ENCODE measurements at regions of chr11 and their contacts with region 1.

Region 1: GRCh38 chr11:100687630-100688395 is 725 bp downstream of the ARHGAP42 start:
- DNase-seq: peak; percentile 79
- H3K4me3 ChIP-seq: peak overlapping the region; percentile 50 to 78 (median 63)
- H3K27ac ChIP-seq: peak overlapping the region; percentile 67
- H3K4me1 ChIP-seq: peaks cover 36% of the 10 kb centered on the region
- H3K27me3 ChIP-seq: no peaks in the 10 kb centered on the region
- CTCF ChIP-seq: peak; percentile 68 to 69

Region 2: DNA sequence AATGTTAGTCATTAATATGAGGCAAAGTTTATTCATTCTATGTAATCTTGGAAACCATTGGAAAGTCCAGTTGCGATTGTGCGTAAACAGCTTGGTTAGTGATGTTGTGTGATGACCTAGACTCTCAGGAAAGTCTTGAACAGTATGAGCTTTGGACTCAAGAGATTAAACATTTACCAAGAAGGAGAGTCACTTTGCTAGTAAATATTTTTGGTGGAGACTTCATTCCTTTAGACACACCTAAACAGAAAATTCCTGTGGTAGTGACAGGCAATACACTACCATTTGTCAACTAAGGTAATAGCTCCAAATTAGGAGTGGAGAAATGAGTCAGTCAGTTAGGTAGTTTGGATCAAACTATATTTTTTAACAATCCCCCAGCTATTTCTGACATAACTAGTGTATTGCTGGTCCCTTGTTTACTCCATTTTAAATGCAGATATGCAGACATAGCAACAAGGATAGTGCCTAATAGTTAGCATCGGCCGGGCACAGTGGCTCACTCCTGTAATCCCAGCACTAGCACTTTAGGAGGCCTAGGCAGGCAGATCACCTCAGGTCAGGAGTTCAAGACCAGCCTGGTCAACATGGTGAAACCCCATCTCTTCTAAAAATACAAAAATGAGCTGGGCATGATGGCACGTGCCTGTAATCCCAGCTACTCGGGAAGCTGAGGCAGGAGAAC is 88.5 kb after region 1 on chr11:
- CTCF ChIA-PET with region 1: no interaction called
- dilution Hi-C with region 1: no loop called
- in situ Hi-C with region 1: no loop called
- intact Hi-C with region 1: loop called (anchors 1 kb)
- DNase-seq: peak; percentile 90
- H3K4me3 ChIP-seq: no peak overlapping the region
- H3K27ac ChIP-seq: peak overlapping the region; percentile 87
- H3K4me1 ChIP-seq: peaks cover 26% of the 10 kb centered on the region
- H3K27me3 ChIP-seq: no peaks in the 10 kb centered on the region
- CTCF ChIP-seq: no peak

Region 3: DNA sequence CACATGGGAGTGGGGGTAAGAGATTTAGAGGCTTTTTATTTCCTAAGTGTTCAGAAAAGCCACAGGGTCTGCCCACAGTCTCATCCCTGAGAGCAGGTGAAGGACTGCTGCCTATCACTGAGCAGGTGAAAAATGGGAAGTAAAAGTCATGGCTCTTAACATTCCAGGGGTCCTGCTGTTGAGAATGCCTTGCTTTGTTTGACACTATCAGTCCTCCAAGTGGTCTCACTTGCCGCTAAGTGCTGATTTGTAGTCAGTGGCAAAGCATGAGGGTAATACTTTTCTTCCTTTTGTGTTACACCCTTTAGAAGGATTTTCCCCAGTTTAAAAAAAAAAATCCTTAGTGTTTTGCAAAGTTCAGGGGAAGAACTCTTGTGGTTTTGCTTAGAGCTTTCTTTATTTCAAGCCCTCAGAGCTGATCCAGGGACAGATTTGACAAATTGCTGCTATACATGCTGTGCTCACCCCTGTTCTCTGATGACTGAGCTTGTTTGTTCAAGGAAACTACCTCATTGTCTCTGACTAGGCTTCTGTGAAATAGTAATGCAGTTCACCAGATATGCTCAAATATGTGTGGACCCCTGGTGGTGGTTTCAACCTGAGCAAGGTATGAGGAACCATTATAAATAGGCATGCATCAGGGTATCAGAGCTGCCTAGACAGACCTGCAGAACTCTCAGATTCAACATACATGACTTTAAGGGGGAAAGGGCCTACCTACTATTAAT is 140.3 kb after region 1 on chr11:
- CTCF ChIA-PET with region 1: interaction called, 3 read pairs
- dilution Hi-C with region 1: no loop called
- in situ Hi-C with region 1: no loop called
- intact Hi-C with region 1: loop called (anchors 10 kb)
- DNase-seq: peak; percentile 57
- H3K4me3 ChIP-seq: no peak overlapping the region
- H3K27ac ChIP-seq: no peak overlapping the region
- H3K4me1 ChIP-seq: peaks cover 28% of the 10 kb centered on the region
- H3K27me3 ChIP-seq: no peaks in the 10 kb centered on the region
- CTCF ChIP-seq: peak; percentile 27 to 36